Activated CD8-positive, alpha-beta memory T cell treated with anti-CD3 and anti-CD28 coated beads, Interleukin-2, amount 10 ng/mL, durations not matched to agents 7 days and 5 days (primary cell): ENCODE measurements at regions of chr6 and their contacts with region 1.

Region 1: DNA sequence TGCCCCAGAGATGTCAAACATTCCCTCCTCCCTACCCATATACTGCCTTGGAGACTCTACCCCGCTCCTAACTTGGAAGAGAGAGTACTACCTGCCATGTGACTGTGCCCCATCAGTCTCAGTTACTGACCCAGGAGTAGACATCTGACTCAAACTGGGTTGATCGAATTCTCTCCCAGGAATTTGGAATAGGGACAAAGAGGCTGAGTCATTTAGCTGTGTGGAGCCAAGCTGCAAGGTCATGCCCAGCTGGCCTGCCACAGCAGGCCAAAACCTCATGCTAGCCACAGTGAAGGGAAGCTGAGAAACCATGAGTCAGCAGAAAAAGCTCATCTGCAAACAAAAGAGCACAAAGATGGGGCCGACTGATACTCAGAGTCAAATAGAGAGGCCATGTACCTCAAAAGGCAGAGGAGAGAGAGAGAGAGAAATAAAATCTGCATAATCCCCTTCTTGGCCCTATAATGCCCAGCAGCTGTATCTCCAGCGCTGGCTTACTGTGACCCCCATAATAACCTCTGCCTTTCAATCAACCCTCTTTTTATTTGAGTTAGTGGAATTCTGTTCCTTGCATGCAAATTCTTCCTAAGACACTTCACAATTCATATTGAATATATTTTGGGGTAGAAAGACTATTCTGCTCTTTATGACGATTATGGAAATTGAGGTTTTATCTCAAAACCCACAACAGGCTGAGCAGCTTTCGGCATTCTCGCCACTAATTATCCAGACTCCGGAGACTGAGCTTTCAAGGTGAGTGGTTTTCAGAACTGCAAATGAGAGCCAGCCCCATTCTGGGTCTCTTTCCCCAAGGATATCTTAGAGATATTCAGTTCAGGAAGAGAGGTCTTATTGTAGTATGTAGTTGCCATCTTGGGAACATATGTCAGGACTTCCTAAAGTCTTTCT is 21.4 kb upstream of the AKIRIN2 start:
- DNase-seq: peak; percentile 77
- ATAC-seq: peak; percentile 35
- H3K4me3 Mint-ChIP-seq: peak overlapping the region; percentile 34
- H3K27ac Mint-ChIP-seq: peak overlapping the region; percentile 81
- H3K4me1 Mint-ChIP-seq: peaks cover 64% of the 10 kb centered on the region
- H3K27me3 Mint-ChIP-seq: no peaks in the 10 kb centered on the region

Region 2: DNA sequence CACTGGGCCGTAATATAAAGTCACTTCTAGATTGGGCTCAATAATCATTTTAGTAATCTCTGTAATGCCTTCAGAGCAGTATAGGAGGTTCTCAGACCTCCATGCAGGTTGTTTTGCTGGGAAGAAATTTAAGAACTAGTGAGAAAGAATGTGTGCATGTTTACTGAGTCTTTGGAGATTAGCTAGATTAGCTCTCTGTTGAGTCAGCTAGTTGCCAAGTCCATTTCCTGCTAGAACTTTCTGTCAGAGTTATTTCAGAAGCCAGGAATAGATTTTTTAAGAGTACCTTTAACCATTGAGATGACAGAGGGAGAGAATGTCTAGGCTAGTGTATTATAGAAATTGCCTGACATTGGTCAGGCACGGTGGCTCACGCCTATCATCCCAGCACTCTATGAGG is 100.2 kb before region 1 on chr6:
- CTCF ChIA-PET with region 1: no interaction called
- DNase-seq: no peak
- ATAC-seq: no peak
- H3K4me3 Mint-ChIP-seq: no peak overlapping the region
- H3K27ac Mint-ChIP-seq: no peak overlapping the region
- H3K4me1 Mint-ChIP-seq: peaks cover 10% of the 10 kb centered on the region
- H3K27me3 Mint-ChIP-seq: no peaks in the 10 kb centered on the region

Region 3: GRCh38 chr6:87705070-87705691 is 18.2 kb before region 1 on chr6:
- CTCF ChIA-PET with region 1: interaction called, 27 read pairs
- DNase-seq: peak; percentile 90
- ATAC-seq: peak; percentile 53
- H3K4me3 Mint-ChIP-seq: peak overlapping the region; percentile 33
- H3K27ac Mint-ChIP-seq: peak overlapping the region; percentile 97
- H3K4me1 Mint-ChIP-seq: peaks cover 44% of the 10 kb centered on the region
- H3K27me3 Mint-ChIP-seq: no peaks in the 10 kb centered on the region

Region 4: GRCh38 chr6:87738000-87738399 is 14.6 kb after region 1 on chr6:
- CTCF ChIA-PET with region 1: interaction called, 18 read pairs
- DNase-seq: no peak
- ATAC-seq: peak; percentile 55
- H3K4me3 Mint-ChIP-seq: peak overlapping the region; percentile 15
- H3K27ac Mint-ChIP-seq: peak overlapping the region; percentile 83
- H3K4me1 Mint-ChIP-seq: peaks cover 43% of the 10 kb centered on the region
- H3K27me3 Mint-ChIP-seq: no peaks in the 10 kb centered on the region